Mammary epithelial cell (primary cell): ENCODE measurements at regions of chrX and their contacts with region 1.

Region 1: GRCh38 chrX:19372170-19372546 is 28.4 kb downstream of the PDHA1 start:
- DNase-seq: peak; percentile 46
- H3K4me3 ChIP-seq: peak overlapping the region in 2 of 3 experiments; percentile 8 to 37
- H3K27ac ChIP-seq: no peak overlapping the region
- H3K4me1 ChIP-seq: peaks cover 4% of the 10 kb centered on the region
- H3K27me3 ChIP-seq: no peaks in the 10 kb centered on the region
- CTCF ChIP-seq: peak; percentile 72

Region 2: GRCh38 chrX:18938710-18939109 is 433.4 kb before region 1 on chrX:
- CTCF ChIA-PET with region 1: no interaction called
- dilution Hi-C with region 1: no loop called
- in situ Hi-C with region 1: no loop called
- intact Hi-C with region 1: no loop called
- DNase-seq: no peak
- H3K4me3 ChIP-seq: no peak overlapping the region
- H3K27ac ChIP-seq: no peak overlapping the region
- H3K4me1 ChIP-seq: no peaks in the 10 kb centered on the region
- H3K27me3 ChIP-seq: no peaks in the 10 kb centered on the region
- CTCF ChIP-seq: no peak

Region 3: GRCh38 chrX:19343535-19344408 is 28.4 kb before region 1 on chrX and contains the start of gene PDHA1:
- CTCF ChIA-PET with region 1: no interaction called
- dilution Hi-C with region 1: no loop called
- in situ Hi-C with region 1: no loop called
- intact Hi-C with region 1: no loop called
- DNase-seq: peak; percentile 90
- H3K4me3 ChIP-seq: peak within 1 kb of the TSS; percentile 69 to 79 (median 76)
- H3K27ac ChIP-seq: peak within 1 kb of the TSS; percentile 61
- H3K4me1 ChIP-seq: peaks cover 5% of the 10 kb centered on the region
- H3K27me3 ChIP-seq: no peaks in the 10 kb centered on the region
- CTCF ChIP-seq: no peak
- total RNA-seq, gene PDHA1: 48.8 to 176 TPM

Region 4: GRCh38 chrX:19514791-19515614 is 142.8 kb after region 1 on chrX and contains the start of gene MAP3K15:
- CTCF ChIA-PET with region 1: no interaction called
- dilution Hi-C with region 1: no loop called
- in situ Hi-C with region 1: no loop called
- intact Hi-C with region 1: loop called (anchors 5 kb)
- DNase-seq: no peak
- H3K4me3 ChIP-seq: peak within 1 kb of the TSS in 1 of 3 experiments; percentile 24
- H3K27ac ChIP-seq: no peak within 1 kb of the TSS
- H3K4me1 ChIP-seq: no peaks in the 10 kb centered on the region
- H3K27me3 ChIP-seq: no peaks in the 10 kb centered on the region
- CTCF ChIP-seq: no peak
- total RNA-seq, gene MAP3K15: under 0.01 TPM in 1 of 2 donors, not detected in the other

Region 5: GRCh38 chrX:19535476-19535875 is 163.3 kb after region 1 on chrX:
- CTCF ChIA-PET with region 1: no interaction called
- dilution Hi-C with region 1: no loop called
- in situ Hi-C with region 1: loop called in 1 of 2 experiments (anchors 25 kb)
- intact Hi-C with region 1: loop called (anchors 1 kb)
- DNase-seq: no peak
- H3K4me3 ChIP-seq: no peak overlapping the region
- H3K27ac ChIP-seq: no peak overlapping the region
- H3K4me1 ChIP-seq: no peaks in the 10 kb centered on the region
- H3K27me3 ChIP-seq: no peaks in the 10 kb centered on the region
- CTCF ChIP-seq: peak; percentile 13 to 40

Region 6: GRCh38 chrX:19544693-19545305 is 172.6 kb after region 1 on chrX:
- CTCF ChIA-PET with region 1: no interaction called
- dilution Hi-C with region 1: no loop called
- in situ Hi-C with region 1: loop called in 1 of 2 experiments (anchors 25 kb)
- intact Hi-C with region 1: no loop called
- DNase-seq: peak; percentile 36
- H3K4me3 ChIP-seq: no peak overlapping the region
- H3K27ac ChIP-seq: no peak overlapping the region
- H3K4me1 ChIP-seq: no peaks in the 10 kb centered on the region
- H3K27me3 ChIP-seq: no peaks in the 10 kb centered on the region
- CTCF ChIP-seq: peak; percentile 79 to 82

Region 7: DNA sequence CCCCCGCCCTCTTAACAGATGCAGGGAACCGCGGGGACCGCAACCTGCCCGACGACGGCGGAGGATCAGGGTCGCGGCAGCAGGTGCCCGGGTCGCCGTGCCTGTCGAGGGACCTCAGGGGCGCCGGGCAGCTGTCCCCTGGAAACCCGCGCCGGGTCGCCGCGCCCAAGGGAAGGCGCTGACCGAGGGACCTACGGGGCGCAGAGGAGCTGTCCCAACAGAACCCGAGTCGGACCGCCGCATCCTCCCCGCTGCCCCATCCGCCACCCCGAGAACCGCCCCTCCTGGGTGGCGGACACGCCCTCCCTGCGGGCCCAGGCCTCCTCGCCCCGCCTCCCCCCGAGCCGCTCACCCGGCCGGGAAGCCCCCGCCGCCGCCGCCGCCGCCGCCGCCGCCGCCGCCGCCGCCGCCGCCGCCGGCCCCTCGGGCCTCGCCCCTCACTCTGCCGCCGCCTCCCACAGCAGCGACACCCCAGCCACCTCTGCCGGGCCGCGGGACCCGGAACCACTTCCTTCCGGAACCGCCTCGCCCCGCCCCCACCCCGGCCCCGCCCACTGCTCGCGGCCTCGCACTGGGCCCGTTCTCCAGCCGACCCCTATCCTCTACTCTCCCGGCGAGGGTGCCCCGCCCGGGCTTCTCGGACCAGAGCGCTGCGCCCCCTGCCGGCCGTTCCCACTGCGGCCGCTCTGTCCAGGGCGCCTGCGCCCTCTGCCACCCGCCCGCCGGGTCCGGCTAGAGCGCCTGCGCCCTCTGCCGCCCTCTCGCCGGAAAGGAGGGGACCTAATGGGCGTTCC is 618.6 kb after region 1 on chrX and contains the start of gene BCLAF3:
- CTCF ChIA-PET with region 1: no interaction called
- dilution Hi-C with region 1: no loop called
- in situ Hi-C with region 1: no loop called
- intact Hi-C with region 1: loop called (anchors 1 kb)
- DNase-seq: peak; percentile 79
- H3K4me3 ChIP-seq: peak within 1 kb of the TSS; percentile 55 to 72 (median 71)
- H3K27ac ChIP-seq: peak within 1 kb of the TSS; percentile 16
- H3K4me1 ChIP-seq: no peaks in the 10 kb centered on the region
- H3K27me3 ChIP-seq: no peaks in the 10 kb centered on the region
- CTCF ChIP-seq: peak; percentile 42 to 68
- total RNA-seq, gene BCLAF3: 7.5 to 11.0 TPM